ENCODE measurements at regions of chr18 and their contacts with region 1.

Region 1: GRCh38 chr18:54269893-54270844 is 852 bp downstream of the POLI start:
- DNase-seq: peak; percentile 79
- ATAC-seq: peak; percentile 57
- H3K4me3 Mint-ChIP-seq: peak overlapping the region; percentile 83
- H3K27ac Mint-ChIP-seq: peak overlapping the region; percentile 98
- H3K4me1 Mint-ChIP-seq: peaks cover 33% of the 10 kb centered on the region
- H3K27me3 Mint-ChIP-seq: no peaks in the 10 kb centered on the region

Region 2: GRCh38 chr18:54173980-54174630 is 96.1 kb before region 1 on chr18:
- CTCF ChIA-PET with region 1: interaction called, 13 read pairs
- POLR2A ChIA-PET with region 1: no interaction called
- DNase-seq: no peak
- ATAC-seq: peak; percentile 53
- H3K4me3 Mint-ChIP-seq: no peak overlapping the region
- H3K27ac Mint-ChIP-seq: no peak overlapping the region
- H3K4me1 Mint-ChIP-seq: peaks cover 31% of the 10 kb centered on the region
- H3K27me3 Mint-ChIP-seq: no peaks in the 10 kb centered on the region

Region 3: DNA sequence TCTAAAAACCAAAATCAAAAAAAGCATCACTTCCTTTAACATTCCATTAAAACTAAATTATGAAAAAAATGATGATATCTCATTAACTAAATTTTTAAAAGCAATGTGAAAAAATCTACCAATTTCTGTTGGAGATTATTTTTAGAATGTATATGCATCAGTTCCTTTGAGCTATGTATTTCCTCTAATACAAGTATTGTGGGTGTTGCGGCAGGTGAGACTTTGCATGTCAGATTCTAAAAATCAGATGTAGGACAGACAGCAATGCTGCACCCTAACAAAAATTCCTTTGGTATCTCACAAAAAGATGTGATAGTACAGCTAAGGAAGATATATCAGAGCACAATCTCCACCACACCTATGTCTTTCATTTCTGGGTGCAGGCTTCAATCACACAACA is 52.5 kb before region 1 on chr18:
- CTCF ChIA-PET with region 1: interaction called, 69 read pairs
- POLR2A ChIA-PET with region 1: interaction called, 28 read pairs
- DNase-seq: no peak
- ATAC-seq: no peak
- H3K4me3 Mint-ChIP-seq: no peak overlapping the region
- H3K27ac Mint-ChIP-seq: no peak overlapping the region
- H3K4me1 Mint-ChIP-seq: peaks cover 50% of the 10 kb centered on the region
- H3K27me3 Mint-ChIP-seq: no peaks in the 10 kb centered on the region

Region 4: DNA sequence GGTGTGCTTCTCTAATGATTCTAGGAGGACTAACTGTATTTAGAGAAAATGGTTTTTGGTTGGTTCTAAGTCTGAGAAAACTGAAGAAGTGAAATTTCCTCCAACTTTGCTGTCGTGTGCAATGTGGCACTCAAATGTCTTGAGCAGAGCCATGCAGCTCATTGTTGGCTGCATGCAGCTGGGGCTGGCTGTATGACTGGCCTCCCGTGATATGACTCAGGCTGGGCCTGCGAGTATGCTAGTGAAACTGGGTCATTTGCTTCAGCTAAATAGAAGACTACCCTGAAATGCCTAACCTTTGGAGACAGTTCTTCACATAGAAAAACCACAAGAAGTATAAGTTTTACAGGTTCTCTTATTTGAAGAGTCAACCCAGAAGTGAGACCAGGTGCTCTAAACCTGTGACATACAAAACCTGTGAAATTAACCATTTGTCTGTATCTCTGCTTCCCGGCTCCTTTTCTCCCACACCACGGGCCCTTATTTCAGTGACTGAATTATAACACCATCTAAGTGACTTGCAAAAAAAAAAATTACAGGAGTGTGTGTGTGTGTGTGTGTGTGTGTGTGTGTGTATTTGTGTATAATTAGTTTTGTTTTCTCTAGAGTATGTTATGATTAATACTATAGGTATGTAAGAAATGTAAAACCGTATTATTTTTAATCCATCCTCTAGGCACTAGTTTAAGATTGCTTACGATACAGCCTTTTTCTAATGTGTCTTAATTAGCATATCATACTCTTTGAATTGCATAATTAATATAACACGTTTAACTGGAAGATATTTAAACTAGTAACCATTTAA is 15.0 kb after region 1 on chr18:
- CTCF ChIA-PET with region 1: interaction called, 23 read pairs
- POLR2A ChIA-PET with region 1: interaction called, 5 read pairs
- DNase-seq: peak; percentile 61
- ATAC-seq: peak; percentile 96
- H3K4me3 Mint-ChIP-seq: no peak overlapping the region
- H3K27ac Mint-ChIP-seq: peak overlapping the region; percentile 23
- H3K4me1 Mint-ChIP-seq: peaks cover 16% of the 10 kb centered on the region
- H3K27me3 Mint-ChIP-seq: no peaks in the 10 kb centered on the region

Region 5: GRCh38 chr18:54357660-54358494 is 87.7 kb after region 1 on chr18 and contains the starts of genes C18orf54 and STARD6:
- CTCF ChIA-PET with region 1: interaction called, 29 read pairs
- POLR2A ChIA-PET with region 1: interaction called, 33 read pairs
- DNase-seq: peak; percentile 93
- ATAC-seq: peak; percentile 97
- H3K4me3 Mint-ChIP-seq: peak within 1 kb of the TSS; percentile 93
- H3K27ac Mint-ChIP-seq: peak within 1 kb of the TSS; percentile 93
- H3K4me1 Mint-ChIP-seq: peaks cover 23% of the 10 kb centered on the region
- H3K27me3 Mint-ChIP-seq: peaks cover 3% of the 10 kb centered on the region
- total RNA-seq, gene C18orf54: 10.9 to 11.9 TPM
- total RNA-seq, gene STARD6: not detected

Measured in activated CD8-positive, alpha-beta T cell treated with anti-CD3 and anti-CD28 coated beads, Interleukin-2, amount 10 ng/mL, durations not matched to agents 7 days and 5 days (primary cell).